Activated naive CD4-positive, alpha-beta T cell treated with anti-CD3 and anti-CD28 coated beads for 36 hours (primary cell): ENCODE measurements at regions of chrX and their contacts with region 1.

Region 1: DNA sequence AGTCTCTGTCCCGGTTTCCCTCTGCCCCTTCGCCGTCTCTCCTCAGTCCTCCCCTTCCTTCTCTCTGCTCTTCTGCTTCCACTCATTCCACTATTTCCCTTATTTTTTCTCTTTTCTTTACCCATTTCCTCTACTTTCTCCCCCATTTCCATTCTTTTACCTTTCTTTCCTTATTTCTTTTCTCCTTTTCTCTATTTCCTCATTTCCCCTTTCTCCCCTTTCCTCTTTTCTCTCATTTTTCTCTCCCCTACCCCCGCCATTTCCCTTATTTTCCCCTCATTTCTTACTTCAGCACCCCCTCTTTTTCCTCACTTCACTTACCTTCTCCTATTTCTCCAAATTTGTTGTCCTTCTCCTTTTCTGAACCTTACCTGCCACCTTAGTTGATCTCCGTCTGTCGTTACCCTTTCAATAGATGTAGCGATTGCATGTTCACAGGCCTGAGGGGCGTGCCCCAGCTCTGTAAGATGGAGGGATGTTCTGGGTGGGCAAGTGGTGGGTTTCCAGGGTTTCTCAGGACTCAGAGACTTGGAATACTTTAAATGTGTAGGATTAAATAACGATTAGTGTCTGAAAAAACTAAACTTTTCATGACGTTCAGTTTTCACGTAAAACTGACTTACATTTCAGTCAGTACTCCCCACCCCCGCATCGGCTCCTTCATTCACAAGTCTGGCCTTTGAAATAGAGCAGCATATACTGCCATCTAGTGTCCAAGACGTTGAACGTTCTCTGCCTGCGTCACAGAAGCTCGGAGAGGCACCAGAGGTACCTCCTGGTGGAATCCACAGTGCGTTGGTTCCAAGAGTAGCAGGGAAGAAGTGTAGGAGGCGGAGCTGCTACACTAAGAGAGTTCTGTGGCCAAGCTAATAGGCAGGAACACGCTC is 641 bp upstream of the NCBP2L start:
- DNase-seq: peak; percentile 85
- H3K4me3 Mint-ChIP-seq: peak overlapping the region; percentile 85
- H3K27ac Mint-ChIP-seq: peak overlapping the region; percentile 68
- H3K4me1 Mint-ChIP-seq: peaks cover 4% of the 10 kb centered on the region
- H3K27me3 Mint-ChIP-seq: no peaks in the 10 kb centered on the region

Region 2: GRCh38 chrX:106999002-106999975 is 777.6 kb before region 1 on chrX:
- CTCF ChIA-PET with region 1: no interaction called
- intact Hi-C with region 1: loop called (anchors 1 kb)
- DNase-seq: peak; percentile 63
- H3K4me3 Mint-ChIP-seq: peak overlapping the region; percentile 72
- H3K27ac Mint-ChIP-seq: no peak overlapping the region
- H3K4me1 Mint-ChIP-seq: peaks cover 8% of the 10 kb centered on the region
- H3K27me3 Mint-ChIP-seq: no peaks in the 10 kb centered on the region

Region 3: GRCh38 chrX:107454302-107454701 is 322.6 kb before region 1 on chrX:
- CTCF ChIA-PET with region 1: no interaction called
- intact Hi-C with region 1: loop called (anchors 1 kb)
- DNase-seq: peak; percentile 59
- H3K4me3 Mint-ChIP-seq: no peak overlapping the region
- H3K27ac Mint-ChIP-seq: no peak overlapping the region
- H3K4me1 Mint-ChIP-seq: peaks cover 14% of the 10 kb centered on the region
- H3K27me3 Mint-ChIP-seq: peaks cover 32% of the 10 kb centered on the region

Region 4: DNA sequence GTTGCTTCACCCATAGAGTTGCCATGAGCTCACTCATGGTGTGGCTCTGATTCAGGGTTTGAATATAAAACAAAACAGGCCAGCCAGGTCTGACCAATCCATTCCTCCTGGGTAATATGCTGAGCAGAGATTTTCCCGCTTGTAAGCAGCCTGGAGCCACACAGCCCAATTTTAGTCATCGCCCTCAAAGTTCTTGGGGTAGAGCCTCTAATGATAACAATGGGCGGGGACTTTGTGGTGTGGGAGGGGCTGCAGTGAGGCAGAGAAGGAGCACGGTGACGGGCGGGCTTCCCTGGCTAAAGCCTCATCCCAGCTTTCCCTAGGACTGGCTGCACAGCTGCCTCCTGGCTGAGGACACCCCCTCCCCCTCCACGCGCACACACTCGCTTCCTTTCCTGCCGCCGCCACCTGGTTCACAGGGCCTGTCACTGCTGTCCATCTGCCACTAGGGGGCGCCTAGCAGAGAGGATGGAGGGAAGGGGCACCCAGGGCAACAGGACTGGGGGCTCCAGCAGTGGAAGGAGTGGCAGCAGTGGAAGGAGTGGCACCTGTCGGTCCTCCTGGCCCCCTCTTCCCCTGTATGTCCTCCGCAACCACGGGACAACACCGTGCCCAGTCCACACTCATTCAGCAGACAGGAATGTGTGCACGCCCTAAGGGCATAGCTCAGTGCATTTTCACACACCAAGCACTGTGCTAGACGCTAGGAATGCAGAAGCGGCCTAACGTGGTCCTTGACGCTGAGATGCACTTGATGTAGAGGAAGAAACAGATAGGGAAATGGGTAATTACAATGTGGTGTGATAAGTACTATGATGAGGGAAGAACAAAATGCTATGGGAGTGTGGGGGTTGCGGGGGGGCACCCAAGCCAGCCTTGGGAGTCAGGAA is 121.8 kb before region 1 on chrX:
- CTCF ChIA-PET with region 1: interaction called, 124 read pairs
- intact Hi-C with region 1: loop called (anchors 1 kb)
- DNase-seq: peak; percentile 72
- H3K4me3 Mint-ChIP-seq: no peak overlapping the region
- H3K27ac Mint-ChIP-seq: no peak overlapping the region
- H3K4me1 Mint-ChIP-seq: peaks cover 15% of the 10 kb centered on the region
- H3K27me3 Mint-ChIP-seq: no peaks in the 10 kb centered on the region

Region 5: DNA sequence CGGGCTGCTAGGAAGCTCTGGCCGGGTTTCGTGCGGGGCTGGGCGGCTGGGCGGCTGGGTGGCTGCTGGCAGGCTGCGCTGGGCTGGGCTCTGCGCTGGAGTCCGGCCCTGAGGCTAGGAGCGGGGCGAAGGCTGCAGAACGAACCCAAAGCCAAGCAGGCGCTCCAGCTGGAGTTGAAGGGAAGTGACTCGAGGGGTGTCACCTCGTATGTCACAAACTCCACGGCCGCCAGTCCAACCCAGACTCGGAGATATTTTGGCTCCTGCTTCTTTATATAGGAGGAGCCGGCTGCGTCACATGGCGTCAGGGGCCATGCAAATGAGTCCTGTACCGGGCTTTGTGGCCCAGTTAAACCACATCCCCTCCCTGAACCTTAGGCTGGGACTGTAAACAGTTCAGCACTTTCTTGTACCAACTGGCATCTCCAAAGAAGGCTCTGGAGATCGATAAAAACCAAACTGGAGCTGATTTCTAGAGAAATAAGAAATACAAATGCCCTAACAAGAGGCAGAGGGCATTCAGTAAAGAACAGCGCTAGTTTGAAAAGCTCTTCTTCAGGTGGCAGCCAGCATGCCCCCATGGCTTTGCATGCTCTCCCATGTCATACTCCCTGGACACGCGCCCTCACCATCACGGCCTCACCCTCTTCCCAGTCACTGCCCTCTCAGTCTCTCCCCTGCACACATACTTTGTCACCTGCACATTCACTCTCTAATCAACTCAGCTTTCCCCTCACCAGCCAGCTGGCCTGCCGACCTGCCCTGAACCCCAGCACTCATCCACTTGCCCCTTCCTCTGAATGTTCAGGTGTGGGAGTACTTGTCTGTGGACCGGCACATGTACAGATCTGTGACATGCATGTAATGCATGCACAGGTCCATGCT is 59.8 kb before region 1 on chrX:
- CTCF ChIA-PET with region 1: interaction called, 29 read pairs
- intact Hi-C with region 1: loop called (anchors 1 kb)
- DNase-seq: peak; percentile 87
- H3K4me3 Mint-ChIP-seq: peak overlapping the region; percentile 92
- H3K27ac Mint-ChIP-seq: peak overlapping the region; percentile 77
- H3K4me1 Mint-ChIP-seq: peaks cover 37% of the 10 kb centered on the region
- H3K27me3 Mint-ChIP-seq: no peaks in the 10 kb centered on the region

Region 6: DNA sequence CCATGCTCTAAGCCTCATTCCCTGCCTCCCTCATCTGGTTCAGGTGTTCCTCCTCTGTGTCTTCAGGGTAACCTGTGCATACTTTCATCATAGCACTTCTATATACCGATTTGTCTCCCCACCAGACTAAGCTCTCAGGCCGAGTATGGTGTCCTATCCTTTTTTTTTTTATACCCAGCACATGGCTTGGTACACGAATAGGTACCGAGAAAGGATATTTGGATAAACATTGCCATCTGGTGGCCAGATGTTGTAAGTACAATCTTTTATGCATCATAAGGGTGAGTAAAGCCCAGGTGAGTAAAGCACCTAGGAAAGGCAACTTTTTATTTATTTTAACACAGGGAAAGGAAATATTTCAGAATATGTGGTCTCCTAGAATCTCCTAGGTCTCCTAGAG is 117.1 kb after region 1 on chrX:
- CTCF ChIA-PET with region 1: interaction called, 19 read pairs
- intact Hi-C with region 1: loop called (anchors 1 kb)
- DNase-seq: peak; percentile 22
- H3K4me3 Mint-ChIP-seq: no peak overlapping the region
- H3K27ac Mint-ChIP-seq: no peak overlapping the region
- H3K4me1 Mint-ChIP-seq: no peaks in the 10 kb centered on the region
- H3K27me3 Mint-ChIP-seq: no peaks in the 10 kb centered on the region

Region 7: DNA sequence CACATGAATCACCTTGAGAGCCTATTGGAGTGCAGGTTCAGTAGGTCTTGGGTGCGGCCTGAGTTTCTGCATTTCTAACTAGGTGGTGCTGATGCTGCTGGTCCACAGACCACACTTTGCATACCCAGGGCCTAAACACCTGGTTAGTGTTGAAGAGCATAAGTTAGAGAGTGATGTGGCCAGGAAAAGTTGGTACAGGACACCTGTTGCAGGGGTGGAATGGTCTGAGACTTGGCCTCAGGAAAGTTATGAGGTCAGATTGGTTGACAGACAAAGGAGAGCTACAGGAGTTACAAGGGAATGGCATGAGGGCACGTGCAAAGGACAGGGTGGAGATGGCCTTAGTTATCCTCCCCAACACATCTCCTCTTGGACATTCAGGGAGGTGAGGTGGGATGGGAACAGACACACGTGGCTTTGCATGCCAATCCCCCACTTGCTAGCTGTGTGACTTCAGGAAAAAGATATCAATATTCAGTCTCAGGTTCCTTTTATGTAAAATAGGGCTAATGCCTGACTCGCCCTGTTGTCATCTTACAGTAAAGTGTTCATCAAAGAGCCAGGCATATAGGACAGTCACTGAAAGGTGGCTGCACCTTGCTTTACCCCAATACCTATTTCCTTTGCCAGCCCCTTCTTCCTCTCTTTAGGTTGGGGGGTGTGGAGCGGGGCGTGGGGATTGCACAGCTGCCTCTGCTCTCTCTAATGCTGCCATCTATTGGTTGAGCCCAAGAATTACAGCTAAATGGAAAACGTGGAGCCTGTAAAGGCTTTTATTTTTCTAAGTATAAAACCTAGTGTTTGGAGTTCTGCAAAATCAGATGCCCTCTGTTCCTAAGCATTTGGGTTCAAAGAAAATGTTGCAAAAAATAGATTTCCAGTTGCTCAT is 362.2 kb after region 1 on chrX:
- CTCF ChIA-PET with region 1: no interaction called
- intact Hi-C with region 1: no loop called
- DNase-seq: no peak
- H3K4me3 Mint-ChIP-seq: no peak overlapping the region
- H3K27ac Mint-ChIP-seq: no peak overlapping the region
- H3K4me1 Mint-ChIP-seq: no peaks in the 10 kb centered on the region
- H3K27me3 Mint-ChIP-seq: no peaks in the 10 kb centered on the region